ENCODE measurements at regions of chr3 and their contacts with region 1.

Region 1: DNA sequence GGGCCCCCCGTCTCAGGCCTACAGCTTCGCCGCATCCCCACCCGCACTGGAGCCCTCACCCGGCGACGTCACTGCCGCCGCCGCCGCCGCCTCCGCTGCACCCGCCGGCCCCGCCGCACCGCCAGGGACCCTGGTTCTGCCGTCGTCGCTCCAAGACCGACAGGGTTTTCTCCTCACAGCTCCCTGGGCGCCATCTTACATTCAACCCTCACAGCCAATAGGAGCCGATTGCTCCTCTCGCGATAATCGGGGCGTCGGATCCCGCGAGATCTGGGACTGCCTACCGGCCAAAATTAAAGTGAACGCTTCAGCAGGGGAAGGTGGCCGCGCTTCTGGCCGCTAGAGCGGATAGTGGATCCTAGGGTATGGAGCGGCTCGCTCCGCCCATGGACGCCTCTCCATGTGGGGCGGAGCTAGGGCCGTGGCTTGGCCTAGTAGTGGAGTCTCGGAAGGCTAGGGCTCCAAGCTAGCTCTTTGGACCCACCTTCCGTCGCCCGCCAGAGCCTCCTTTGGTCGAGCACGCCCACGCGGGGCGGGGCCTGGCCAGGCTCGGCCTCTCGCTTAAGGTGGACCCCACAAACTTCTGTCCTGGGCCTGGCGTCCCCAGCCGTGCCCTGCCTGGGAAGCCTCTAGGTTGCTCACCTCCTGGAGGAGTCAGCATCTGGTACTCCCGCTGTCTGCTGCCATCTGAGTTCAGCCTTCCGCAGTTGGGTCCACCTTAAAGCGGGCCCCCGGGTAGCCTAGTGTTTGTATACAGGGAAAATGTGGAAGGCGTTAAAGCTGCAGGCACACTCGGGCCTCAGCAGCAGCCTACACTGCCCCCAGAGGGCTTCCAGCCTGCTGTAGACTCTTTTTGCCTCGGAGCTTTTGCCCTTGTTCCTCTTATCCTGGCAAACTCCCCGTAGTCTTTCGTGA is at the start of gene QRICH1:
- DNase-seq: peak; percentile 98
- ATAC-seq: peak; percentile 86
- H3K4me3 Mint-ChIP-seq: peak within 1 kb of the TSS; percentile 93
- H3K27ac Mint-ChIP-seq: peak within 1 kb of the TSS; percentile 99
- H3K4me1 Mint-ChIP-seq: peaks cover 27% of the 10 kb centered on the region
- H3K27me3 Mint-ChIP-seq: no peaks in the 10 kb centered on the region
- total RNA-seq, gene QRICH1: 130 to 131 TPM

Region 2: GRCh38 chr3:48949376-48949717 is 144.8 kb before region 1 on chr3:
- CTCF ChIA-PET with region 1: no interaction called
- POLR2A ChIA-PET with region 1: no interaction called
- DNase-seq: no peak
- ATAC-seq: no peak
- H3K4me3 Mint-ChIP-seq: no peak overlapping the region
- H3K27ac Mint-ChIP-seq: no peak overlapping the region
- H3K4me1 Mint-ChIP-seq: peaks cover 23% of the 10 kb centered on the region
- H3K27me3 Mint-ChIP-seq: no peaks in the 10 kb centered on the region

Region 3: GRCh38 chr3:48989796-48990635 is 104.1 kb before region 1 on chr3 and contains the start of gene P4HTM:
- CTCF ChIA-PET with region 1: interaction called, 29 read pairs
- POLR2A ChIA-PET with region 1: interaction called, 11 read pairs
- DNase-seq: peak; percentile 86
- ATAC-seq: peak; percentile 80
- H3K4me3 Mint-ChIP-seq: peak within 1 kb of the TSS; percentile 91
- H3K27ac Mint-ChIP-seq: peak within 1 kb of the TSS; percentile 93
- H3K4me1 Mint-ChIP-seq: peaks cover 54% of the 10 kb centered on the region
- H3K27me3 Mint-ChIP-seq: no peaks in the 10 kb centered on the region
- total RNA-seq, gene P4HTM: 35.2 to 39.6 TPM

Region 4: GRCh38 chr3:49028673-49029562 is 65.2 kb before region 1 on chr3 and contains the start of gene IMPDH2:
- CTCF ChIA-PET with region 1: interaction called, 13 read pairs
- POLR2A ChIA-PET with region 1: interaction called, 62 read pairs
- DNase-seq: peak; percentile 94
- ATAC-seq: peak; percentile 95
- H3K4me3 Mint-ChIP-seq: peak within 1 kb of the TSS; percentile 92
- H3K27ac Mint-ChIP-seq: peak within 1 kb of the TSS; percentile 96
- H3K4me1 Mint-ChIP-seq: peaks cover 53% of the 10 kb centered on the region
- H3K27me3 Mint-ChIP-seq: no peaks in the 10 kb centered on the region
- total RNA-seq, gene IMPDH2: 227 to 229 TPM

Region 5: DNA sequence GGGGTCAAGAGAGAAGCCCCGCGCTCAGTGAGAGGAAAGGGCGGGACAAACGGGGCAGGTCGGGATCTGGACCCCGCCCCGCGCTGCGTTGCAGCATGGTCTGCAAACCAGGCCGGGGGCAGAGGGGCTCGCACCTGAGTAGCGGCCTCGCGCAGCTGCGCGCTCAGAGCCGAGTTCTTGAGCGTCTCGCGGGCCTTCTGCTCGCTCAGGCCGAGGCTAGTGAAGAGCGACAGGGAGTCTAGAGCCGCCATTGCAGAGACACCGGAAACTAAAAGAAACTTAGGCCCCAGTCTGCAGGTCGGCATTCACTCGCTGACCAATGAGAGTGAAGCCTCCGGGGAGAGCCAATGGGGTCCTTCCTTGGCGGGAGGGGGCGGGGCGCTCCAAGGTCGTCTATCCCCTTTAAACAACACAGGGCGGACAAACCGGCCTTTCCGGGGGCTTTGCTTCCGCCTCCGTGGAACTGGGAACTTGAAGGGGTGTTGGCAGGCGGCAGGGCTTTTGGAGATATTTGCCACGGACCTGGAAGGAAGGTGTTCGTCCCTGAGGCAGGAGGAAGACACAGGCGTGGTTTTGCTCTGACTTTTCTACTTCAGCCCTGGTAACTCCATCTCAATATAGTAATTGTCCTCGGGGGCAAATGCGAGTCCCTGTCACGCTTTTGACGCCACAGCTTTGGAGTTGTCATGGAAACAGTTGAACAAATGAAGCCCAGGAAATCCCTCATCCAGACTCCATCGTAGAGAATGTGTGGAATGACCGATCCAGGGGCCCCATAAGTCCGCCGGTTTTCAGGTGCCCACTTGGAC is 10.6 kb after region 1 on chr3 and contains the start of gene QARS1:
- CTCF ChIA-PET with region 1: interaction called, 39 read pairs
- POLR2A ChIA-PET with region 1: interaction called, 60 read pairs
- DNase-seq: peak; percentile 95
- ATAC-seq: peak; percentile 99
- H3K4me3 Mint-ChIP-seq: peak within 1 kb of the TSS; percentile 98
- H3K27ac Mint-ChIP-seq: peak within 1 kb of the TSS; percentile 94
- H3K4me1 Mint-ChIP-seq: peaks cover 43% of the 10 kb centered on the region
- H3K27me3 Mint-ChIP-seq: no peaks in the 10 kb centered on the region
- total RNA-seq, gene QARS1: 250 to 294 TPM

Region 6: DNA sequence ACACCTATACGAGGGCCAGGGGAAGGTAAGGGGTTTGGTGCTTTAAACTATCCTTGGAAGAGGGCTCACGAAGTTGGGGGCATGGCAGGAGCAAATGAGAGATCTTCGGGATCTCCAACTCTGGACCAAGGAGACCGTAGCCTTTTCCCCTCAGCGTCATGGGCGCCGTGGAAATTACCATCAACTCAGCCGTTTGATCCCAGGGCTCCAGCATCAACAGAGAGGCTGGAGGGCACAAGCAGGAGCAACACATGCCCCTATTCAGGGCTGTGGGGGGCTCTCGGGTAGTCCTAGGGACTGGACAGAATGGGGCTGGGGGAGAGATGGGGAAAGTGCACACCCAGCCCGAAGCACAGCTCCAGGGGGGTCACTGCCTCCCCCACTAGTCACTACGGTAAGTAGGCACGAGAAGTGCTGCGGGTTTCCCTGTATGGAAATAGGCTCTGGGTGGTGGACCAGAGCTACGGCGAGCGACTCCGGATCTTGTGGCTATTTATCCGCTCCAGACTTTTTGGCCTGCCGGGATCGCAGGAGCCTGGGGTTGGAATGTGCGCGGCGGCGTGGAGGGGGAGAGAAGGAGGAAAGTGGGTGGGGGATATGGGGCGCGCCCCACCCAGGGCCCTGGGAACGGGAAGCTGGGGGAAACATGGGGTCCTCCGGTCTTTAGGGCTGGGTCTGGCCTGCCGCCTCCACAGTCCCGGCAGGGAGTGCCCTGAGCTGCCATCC is 39.3 kb after region 1 on chr3:
- CTCF ChIA-PET with region 1: no interaction called
- POLR2A ChIA-PET with region 1: no interaction called
- DNase-seq: no peak
- ATAC-seq: no peak
- H3K4me3 Mint-ChIP-seq: no peak overlapping the region
- H3K27ac Mint-ChIP-seq: no peak overlapping the region
- H3K4me1 Mint-ChIP-seq: peaks cover 13% of the 10 kb centered on the region
- H3K27me3 Mint-ChIP-seq: peaks cover 14% of the 10 kb centered on the region

Region 7: GRCh38 chr3:49165771-49166751 is 72.0 kb after region 1 on chr3 and contains the start of gene CCDC71:
- CTCF ChIA-PET with region 1: interaction called, 9 read pairs
- POLR2A ChIA-PET with region 1: interaction called, 15 read pairs
- DNase-seq: peak; percentile 83
- ATAC-seq: peak; percentile 77
- H3K4me3 Mint-ChIP-seq: peak within 1 kb of the TSS; percentile 92
- H3K27ac Mint-ChIP-seq: peak within 1 kb of the TSS; percentile 93
- H3K4me1 Mint-ChIP-seq: peaks cover 49% of the 10 kb centered on the region
- H3K27me3 Mint-ChIP-seq: no peaks in the 10 kb centered on the region
- total RNA-seq, gene CCDC71: 21.8 to 22.7 TPM

Measured in activated CD8-positive, alpha-beta T cell treated with anti-CD3 and anti-CD28 coated beads, Interleukin-2, amount 10 ng/mL, durations not matched to agents 7 days and 5 days (primary cell).